IMR-90 (cell line): ENCODE measurements at regions of chr11 and their contacts with region 1.

Region 1: GRCh38 chr11:23569547-23569946 is 709.3 kb upstream of the CCDC179 start:
- DNase-seq: no peak
- ATAC-seq: no peak
- H3K4me3 ChIP-seq: no peak overlapping the region
- H3K27ac ChIP-seq: no peak overlapping the region; the same call in 1 of the 2 replicates
- H3K4me1 ChIP-seq: peaks cover 6% of the 10 kb centered on the region
- H3K27me3 ChIP-seq: no peaks in the 10 kb centered on the region
- CTCF ChIP-seq: no peak
- POLR2A ChIP-seq: no peak
- RAD21 ChIP-seq: no peak

Region 2: GRCh38 chr11:23620617-23621016 is 51.1 kb after region 1 on chr11:
- CTCF ChIA-PET with region 1: no interaction called
- POLR2A ChIA-PET with region 1: no interaction called
- dilution Hi-C with region 1: no loop called
- in situ Hi-C with region 1: no loop called
- intact Hi-C with region 1: loop called (anchors 10 kb)
- DNase-seq: peak; percentile 34
- ATAC-seq: no peak
- H3K4me3 ChIP-seq: no peak overlapping the region
- H3K27ac ChIP-seq: no peak overlapping the region
- H3K4me1 ChIP-seq: no peaks in the 10 kb centered on the region
- H3K27me3 ChIP-seq: no peaks in the 10 kb centered on the region
- CTCF ChIP-seq: no peak
- POLR2A ChIP-seq: no peak
- RAD21 ChIP-seq: no peak

Region 3: GRCh38 chr11:23755769-23756168 is 186.2 kb after region 1 on chr11:
- CTCF ChIA-PET with region 1: no interaction called
- POLR2A ChIA-PET with region 1: no interaction called
- dilution Hi-C with region 1: no loop called
- in situ Hi-C with region 1: no loop called
- intact Hi-C with region 1: loop called (anchors 10 kb)
- DNase-seq: no peak
- ATAC-seq: no peak
- H3K4me3 ChIP-seq: no peak overlapping the region
- H3K27ac ChIP-seq: no peak overlapping the region
- H3K4me1 ChIP-seq: no peaks in the 10 kb centered on the region
- H3K27me3 ChIP-seq: no peaks in the 10 kb centered on the region
- CTCF ChIP-seq: no peak
- POLR2A ChIP-seq: no peak
- RAD21 ChIP-seq: no peak